ENCODE measurements at regions of chr11 and their contacts with region 1.

Region 1: DNA sequence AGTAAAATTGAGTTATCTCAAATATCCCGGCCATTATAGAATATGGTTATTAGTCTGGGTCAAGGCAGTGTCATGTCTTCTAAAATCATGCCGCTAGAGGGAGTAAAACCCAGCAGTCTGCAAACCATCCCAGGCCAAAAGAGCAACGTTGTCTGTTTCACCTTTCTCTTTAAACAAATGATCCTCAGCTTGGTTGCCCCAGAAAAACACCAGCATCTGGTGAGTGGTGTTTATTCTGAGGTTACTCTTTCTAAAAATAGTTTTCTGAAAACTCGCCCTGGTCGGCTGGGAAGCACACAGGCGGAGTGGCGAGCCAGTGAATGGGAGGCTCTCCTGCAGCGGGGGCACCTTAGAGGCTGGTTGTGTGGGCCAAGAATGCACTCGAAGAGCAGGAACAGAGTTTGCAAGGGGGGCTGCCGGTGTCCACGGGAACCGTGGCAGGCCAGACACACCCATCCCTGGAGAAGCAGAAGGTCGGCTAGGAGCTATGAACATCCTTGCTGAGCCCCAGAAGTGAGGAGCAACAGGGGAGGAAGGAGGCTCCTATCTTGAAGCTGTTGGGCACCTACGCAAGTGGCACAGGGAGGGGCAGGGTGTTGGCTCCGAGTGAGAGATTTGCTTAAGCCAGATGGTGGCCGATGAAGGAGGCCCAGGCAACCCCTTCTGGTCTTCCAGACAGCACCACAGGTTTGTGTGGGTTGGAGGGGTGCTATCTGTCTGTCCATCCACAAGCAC is 297.1 kb downstream of the ETS1 start:
- DNase-seq: peak; percentile 55 to 94 (median 67)
- ATAC-seq: peak; percentile 71 to 75 (median 72)
- H3K4me3 ChIP-seq: peak overlapping the region; percentile 54 to 60
- H3K4me3 Mint-ChIP-seq: peak overlapping the region; percentile 87 to 91 (median 91)
- H3K27ac ChIP-seq: peak overlapping the region; percentile 99
- H3K27ac Mint-ChIP-seq: peak overlapping the region; percentile 98 to 100
- H3K4me1 ChIP-seq: peaks cover 58 to 67% of the 10 kb centered on the region in 2 experiments
- H3K4me1 Mint-ChIP-seq: peaks cover 93 to 100% (median 98%) of the 10 kb centered on the region in 3 donors
- H3K27me3 ChIP-seq: no peaks in the 10 kb centered on the region
- H3K27me3 Mint-ChIP-seq: no peaks in the 10 kb centered on the region

Region 2: DNA sequence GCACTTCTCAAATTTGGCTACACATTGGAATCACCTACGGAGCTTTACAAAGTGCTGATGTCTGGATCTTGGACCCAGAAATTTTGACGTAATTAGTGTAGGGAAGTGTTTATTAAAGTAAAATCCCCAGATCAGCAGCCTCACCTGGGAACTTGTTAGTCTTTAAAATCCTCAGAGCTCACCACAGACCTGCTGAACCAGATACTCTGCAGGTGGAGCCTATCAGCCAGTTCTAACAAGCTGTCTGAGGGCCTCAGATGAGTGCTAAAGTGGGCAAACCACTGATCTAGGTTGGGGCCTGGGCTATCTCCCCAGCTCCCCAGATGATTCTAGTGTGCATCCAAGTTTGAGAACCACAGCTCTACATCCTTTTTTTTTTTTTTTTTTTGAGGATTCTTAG is 138.9 kb before region 1 on chr11:
- CTCF ChIA-PET with region 1: no interaction called
- POLR2A ChIA-PET with region 1: no interaction called
- DNase-seq: no peak
- ATAC-seq: no peak
- H3K4me3 ChIP-seq: no peak overlapping the region
- H3K4me3 Mint-ChIP-seq: no peak overlapping the region
- H3K27ac ChIP-seq: no peak overlapping the region
- H3K27ac Mint-ChIP-seq: no peak overlapping the region
- H3K4me1 ChIP-seq: no peaks in the 10 kb centered on the region
- H3K4me1 Mint-ChIP-seq: peaks cover 0 to 2% (median 0%) of the 10 kb centered on the region in 3 donors
- H3K27me3 ChIP-seq: peaks cover 0 to 4% of the 10 kb centered on the region in 2 experiments
- H3K27me3 Mint-ChIP-seq: no peaks in the 10 kb centered on the region

Region 3: GRCh38 chr11:128190312-128190711 is 100.0 kb before region 1 on chr11:
- CTCF ChIA-PET with region 1: no interaction called
- POLR2A ChIA-PET with region 1: interaction called in 1 of 2 experiments, 10 read pairs
- DNase-seq: peak in 25 of 35 experiments; percentile 4 to 74 (median 32)
- ATAC-seq: peak in 2 of 4 experiments; percentile 37 to 51
- H3K4me3 ChIP-seq: no peak overlapping the region
- H3K4me3 Mint-ChIP-seq: peak overlapping the region in 1 of 3 donors; percentile 46
- H3K27ac ChIP-seq: peak overlapping the region; percentile 3
- H3K27ac Mint-ChIP-seq: peak overlapping the region; percentile 35 to 66
- H3K4me1 ChIP-seq: peaks cover 21 to 41% of the 10 kb centered on the region in 2 experiments
- H3K4me1 Mint-ChIP-seq: peaks cover 31 to 44% (median 37%) of the 10 kb centered on the region in 3 donors
- H3K27me3 ChIP-seq: no peaks in the 10 kb centered on the region
- H3K27me3 Mint-ChIP-seq: no peaks in the 10 kb centered on the region

Region 4: GRCh38 chr11:128238521-128239265 is 51.6 kb before region 1 on chr11:
- CTCF ChIA-PET with region 1: no interaction called
- POLR2A ChIA-PET with region 1: no interaction called
- DNase-seq: peak in 1 of 35 experiments; percentile 4
- ATAC-seq: peak in 3 of 4 experiments; percentile 26 to 52 (median 34)
- H3K4me3 ChIP-seq: no peak overlapping the region
- H3K4me3 Mint-ChIP-seq: peak overlapping the region in 2 of 3 donors; percentile 17 to 22
- H3K27ac ChIP-seq: no peak overlapping the region
- H3K27ac Mint-ChIP-seq: peak overlapping the region; percentile 56 to 85
- H3K4me1 ChIP-seq: peaks cover 4% of the 10 kb centered on the region in 2 experiments
- H3K4me1 Mint-ChIP-seq: peaks cover 13 to 21% (median 13%) of the 10 kb centered on the region in 3 donors
- H3K27me3 ChIP-seq: no peaks in the 10 kb centered on the region
- H3K27me3 Mint-ChIP-seq: no peaks in the 10 kb centered on the region

Region 5: DNA sequence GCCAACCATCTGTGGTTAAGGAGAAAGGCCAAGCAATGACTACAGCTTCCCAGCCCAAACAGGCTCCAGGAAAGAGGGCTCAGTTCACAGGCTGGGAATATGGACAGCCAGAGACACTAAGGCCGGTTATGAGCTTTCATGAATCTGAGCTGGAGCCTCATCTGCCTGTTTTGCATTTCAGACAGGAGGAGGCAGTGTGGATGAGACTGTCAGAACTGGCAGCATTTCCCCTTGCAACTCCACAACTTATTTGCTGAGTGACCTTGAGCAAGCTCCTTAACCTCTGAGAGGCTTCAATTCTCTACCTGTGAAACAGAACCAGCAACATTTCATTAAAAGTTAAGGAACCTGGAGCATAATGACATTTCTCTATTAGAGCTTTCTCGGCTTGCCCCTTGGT is 33.1 kb after region 1 on chr11:
- CTCF ChIA-PET with region 1: interaction called, 10 to 16 read pairs
- POLR2A ChIA-PET with region 1: interaction called, 3 to 14 read pairs
- DNase-seq: peak in 25 of 35 experiments; percentile 25 to 77 (median 45)
- ATAC-seq: peak in 1 of 4 experiments; percentile 12
- H3K4me3 ChIP-seq: no peak overlapping the region
- H3K4me3 Mint-ChIP-seq: peak overlapping the region in 2 of 3 donors; percentile 37 to 71
- H3K27ac ChIP-seq: peak overlapping the region; percentile 98
- H3K27ac Mint-ChIP-seq: peak overlapping the region; percentile 97 to 99
- H3K4me1 ChIP-seq: peaks cover 74 to 83% of the 10 kb centered on the region in 2 experiments
- H3K4me1 Mint-ChIP-seq: peaks cover 87 to 92% (median 90%) of the 10 kb centered on the region in 3 donors
- H3K27me3 ChIP-seq: no peaks in the 10 kb centered on the region
- H3K27me3 Mint-ChIP-seq: no peaks in the 10 kb centered on the region

Region 6: DNA sequence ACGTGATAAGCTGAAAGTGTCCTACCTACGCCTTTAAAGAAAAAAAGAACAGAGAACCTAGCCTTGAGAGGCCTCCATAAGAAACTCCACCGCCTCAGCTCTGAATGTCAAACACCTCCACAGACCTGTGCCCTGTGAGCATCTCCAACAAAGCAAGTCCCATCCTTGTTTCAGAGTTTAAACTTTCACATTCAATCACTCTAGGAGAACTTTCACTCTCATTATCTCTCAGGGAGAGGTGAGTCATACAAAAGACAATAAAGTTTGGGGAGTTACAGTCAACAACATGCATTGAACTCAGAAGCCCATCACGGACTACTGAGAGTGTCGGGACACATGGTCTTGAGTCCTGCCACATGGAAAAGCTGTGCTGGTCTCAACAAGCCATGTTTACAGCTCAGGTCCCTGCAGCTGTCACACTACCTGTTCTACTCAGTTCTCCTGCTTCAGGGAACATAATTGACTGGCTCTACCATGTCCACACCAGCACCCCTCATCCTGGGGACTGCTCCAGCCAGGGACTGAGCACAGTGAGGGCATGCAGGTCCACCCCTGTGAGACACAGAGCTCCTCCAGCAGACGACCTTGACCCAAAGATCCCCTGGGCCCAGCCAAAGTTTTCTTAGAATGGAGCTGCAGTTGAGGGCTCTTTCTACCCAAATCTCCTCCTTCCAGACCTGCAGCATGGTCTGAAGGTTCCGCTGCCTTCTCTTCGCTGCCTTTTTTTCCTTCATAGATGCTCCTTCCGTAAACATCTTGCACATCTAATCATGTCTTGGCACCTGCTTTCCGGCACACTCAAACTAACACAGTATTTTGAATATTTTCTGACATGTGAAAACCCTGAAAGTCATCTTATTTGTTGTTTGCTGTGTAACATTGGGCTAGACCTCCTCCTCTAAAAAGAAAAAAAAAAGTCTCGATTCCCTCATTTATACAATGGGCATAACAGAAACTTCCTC is 182.1 kb after region 1 on chr11:
- CTCF ChIA-PET with region 1: interaction called, 3 to 12 read pairs
- POLR2A ChIA-PET with region 1: interaction called, 4 to 5 read pairs
- DNase-seq: peak in 4 of 35 experiments; percentile 42 to 70 (median 52)
- ATAC-seq: peak; percentile 12 to 43 (median 30)
- H3K4me3 ChIP-seq: peak overlapping the region; percentile 18 to 42
- H3K4me3 Mint-ChIP-seq: peak overlapping the region; percentile 62 to 99 (median 66)
- H3K27ac ChIP-seq: peak overlapping the region; percentile 96
- H3K27ac Mint-ChIP-seq: peak overlapping the region; percentile 93 to 98
- H3K4me1 ChIP-seq: peaks cover 83 to 86% of the 10 kb centered on the region in 2 experiments
- H3K4me1 Mint-ChIP-seq: peaks cover 100% of the 10 kb centered on the region in 3 donors
- H3K27me3 ChIP-seq: no peaks in the 10 kb centered on the region
- H3K27me3 Mint-ChIP-seq: no peaks in the 10 kb centered on the region

Region 7: DNA sequence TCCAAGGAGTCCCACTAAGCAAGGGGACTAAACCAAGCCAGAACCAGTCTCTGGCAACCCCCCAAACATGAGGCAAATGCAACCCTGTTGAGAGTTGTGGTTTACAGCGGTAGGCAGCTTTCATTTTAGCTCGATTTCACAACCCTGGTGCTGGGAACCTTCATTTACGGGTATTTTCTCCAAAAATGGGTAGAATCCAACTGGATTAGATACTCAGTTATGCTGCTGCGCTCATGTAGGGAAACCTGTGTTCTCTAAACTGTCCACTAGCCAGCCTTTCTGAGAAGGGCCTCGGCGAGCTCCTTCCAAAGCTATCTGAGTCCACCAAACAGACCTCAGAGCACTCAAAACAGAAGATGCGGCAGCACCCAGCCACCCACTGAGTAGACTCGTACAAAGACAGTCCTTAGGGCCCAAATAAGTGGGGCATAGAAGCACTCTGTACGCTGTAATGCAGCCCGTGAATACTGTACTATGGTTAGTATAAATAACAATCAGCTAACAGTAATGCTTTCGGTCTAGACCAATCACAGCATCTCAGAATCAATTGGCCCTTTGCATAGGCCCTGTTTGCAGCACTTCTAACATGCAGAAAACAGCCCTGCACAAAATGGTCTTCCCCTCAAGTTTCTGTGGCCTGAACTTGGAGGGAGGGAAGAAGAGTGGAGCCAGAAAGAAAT is 192.4 kb after region 1 on chr11:
- CTCF ChIA-PET with region 1: interaction called in 1 of 2 experiments, 11 read pairs
- POLR2A ChIA-PET with region 1: interaction called in 1 of 2 experiments, 3 read pairs
- DNase-seq: peak in 30 of 35 experiments; percentile 38 to 85 (median 69)
- ATAC-seq: peak; percentile 66 to 75 (median 72)
- H3K4me3 ChIP-seq: peak overlapping the region in 1 of 2 donors; percentile 17
- H3K4me3 Mint-ChIP-seq: peak overlapping the region; percentile 63 to 99 (median 77)
- H3K27ac ChIP-seq: peak overlapping the region; percentile 96
- H3K27ac Mint-ChIP-seq: peak overlapping the region; percentile 98
- H3K4me1 ChIP-seq: peaks cover 76 to 84% of the 10 kb centered on the region in 2 experiments
- H3K4me1 Mint-ChIP-seq: peaks cover 96 to 100% (median 97%) of the 10 kb centered on the region in 3 donors
- H3K27me3 ChIP-seq: no peaks in the 10 kb centered on the region
- H3K27me3 Mint-ChIP-seq: no peaks in the 10 kb centered on the region

Region 8: DNA sequence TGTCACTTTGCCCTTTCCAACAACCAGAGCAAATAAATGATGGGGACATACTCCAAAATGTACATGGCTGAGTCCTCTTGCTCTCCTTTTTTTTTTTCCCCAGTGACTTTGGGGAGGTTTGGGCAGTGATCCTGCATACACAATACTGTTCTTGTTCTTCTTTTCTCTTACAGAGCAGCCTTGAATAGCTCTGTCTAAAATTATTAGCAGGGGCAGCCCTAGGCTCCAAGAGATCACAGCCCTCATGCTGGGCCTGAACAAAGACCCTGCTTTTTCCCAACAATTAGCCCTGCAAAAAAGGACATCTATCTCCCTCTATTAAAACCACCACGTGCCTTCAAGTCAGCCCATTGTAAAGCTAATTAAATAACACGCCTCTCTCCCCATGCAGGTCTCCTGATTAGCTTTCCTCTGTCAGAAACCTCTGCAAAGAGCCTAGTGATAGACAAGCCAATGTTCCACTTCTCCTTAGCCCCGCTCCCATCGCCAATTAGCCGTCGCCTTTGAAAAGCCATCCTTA is 242.4 kb after region 1 on chr11:
- CTCF ChIA-PET with region 1: no interaction called
- POLR2A ChIA-PET with region 1: no interaction called
- DNase-seq: no peak
- ATAC-seq: no peak
- H3K4me3 ChIP-seq: no peak overlapping the region
- H3K4me3 Mint-ChIP-seq: no peak overlapping the region
- H3K27ac ChIP-seq: no peak overlapping the region
- H3K27ac Mint-ChIP-seq: no peak overlapping the region
- H3K4me1 ChIP-seq: peaks cover 8 to 12% of the 10 kb centered on the region in 2 experiments
- H3K4me1 Mint-ChIP-seq: peaks cover 53 to 73% (median 58%) of the 10 kb centered on the region in 3 donors
- H3K27me3 ChIP-seq: no peaks in the 10 kb centered on the region
- H3K27me3 Mint-ChIP-seq: no peaks in the 10 kb centered on the region

Region 9: DNA sequence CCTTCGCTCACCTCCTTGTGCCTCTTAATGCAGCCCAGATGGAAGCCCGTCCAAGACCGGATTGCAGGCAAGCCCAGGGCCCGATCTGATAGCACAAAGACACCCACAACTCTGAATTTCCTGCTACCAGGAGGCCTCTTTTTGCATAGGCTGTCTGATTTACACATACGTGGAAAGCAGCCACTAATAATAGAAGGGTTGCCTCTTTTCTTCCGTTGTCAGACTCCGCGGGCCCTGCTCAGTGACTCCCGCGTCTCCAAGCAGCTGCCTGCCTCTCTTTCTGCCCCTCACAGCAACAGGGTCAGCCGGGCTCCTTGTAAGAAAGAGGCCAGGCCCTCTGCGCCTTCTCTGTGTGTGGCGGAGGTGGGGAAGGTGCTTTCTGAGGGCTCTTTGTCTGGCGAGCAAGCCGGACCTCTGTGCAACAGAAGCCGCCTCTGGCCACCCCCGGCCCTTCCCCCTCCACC is 430.3 kb after region 1 on chr11:
- CTCF ChIA-PET with region 1: no interaction called
- POLR2A ChIA-PET with region 1: interaction called in 1 of 2 experiments, 15 read pairs
- DNase-seq: peak in 27 of 35 experiments; percentile 19 to 66 (median 41)
- ATAC-seq: peak; percentile 40 to 56 (median 51)
- H3K4me3 ChIP-seq: peak overlapping the region; percentile 4 to 14
- H3K4me3 Mint-ChIP-seq: peak overlapping the region; percentile 70 to 82 (median 76)
- H3K27ac ChIP-seq: peak overlapping the region; percentile 77
- H3K27ac Mint-ChIP-seq: peak overlapping the region; percentile 98 to 100
- H3K4me1 ChIP-seq: peaks cover 86 to 100% of the 10 kb centered on the region in 2 experiments
- H3K4me1 Mint-ChIP-seq: peaks cover 98 to 100% (median 100%) of the 10 kb centered on the region in 3 donors
- H3K27me3 ChIP-seq: no peaks in the 10 kb centered on the region
- H3K27me3 Mint-ChIP-seq: peaks cover 0 to 1% of the 10 kb centered on the region in 2 donors

Measured in T-cell (primary cell).